HepG2 (cell line): ENCODE measurements at regions of chr14 and their contacts with region 1.

Region 1: GRCh38 chr14:23320774-23321571 is at the start of gene PABPN1:
- DNase-seq: peak; percentile 100
- ATAC-seq: peak; percentile 94
- H3K4me3 ChIP-seq: peak within 1 kb of the TSS; percentile 79 to 99 (median 98)
- H3K27ac ChIP-seq: peak within 1 kb of the TSS; percentile 95
- H3K4me1 ChIP-seq: peaks cover 36% of the 10 kb centered on the region
- H3K27me3 ChIP-seq: peaks cover 0 to 6% of the 10 kb centered on the region in 2 experiments; a peak in 2 of 5 replicates
- CTCF ChIP-seq: peak; percentile 10
- EP300 ChIP-seq: peak; percentile 68 to 90; a peak in 3 of 4 replicates
- POLR2A ChIP-seq: peak in 1 of 2 experiments; percentile 91; a peak in 2 of 4 replicates
- RAD21 ChIP-seq: peak; percentile 67
- total RNA-seq, gene PABPN1: 173 and 233 TPM in 2 replicates

Region 2: GRCh38 chr14:22955702-22956569 is 365.0 kb before region 1 on chr14:
- CTCF ChIA-PET with region 1: no interaction called
- POLR2A ChIA-PET with region 1: no interaction called
- in situ Hi-C with region 1: no loop called
- intact Hi-C with region 1: no loop called
- DNase-seq: peak; percentile 48
- ATAC-seq: peak; percentile 27
- H3K4me3 ChIP-seq: peak overlapping the region; percentile 73 to 78 (median 77)
- H3K27ac ChIP-seq: peak overlapping the region; percentile 78
- H3K4me1 ChIP-seq: peaks cover 47% of the 10 kb centered on the region
- H3K27me3 ChIP-seq: no peaks in the 10 kb centered on the region; a peak in 1 of 5 replicates
- CTCF ChIP-seq: no peak
- EP300 ChIP-seq: peak in 1 of 2 experiments; percentile 25; a peak in 1 of 4 replicates
- POLR2A ChIP-seq: no peak
- RAD21 ChIP-seq: no peak

Region 3: DNA sequence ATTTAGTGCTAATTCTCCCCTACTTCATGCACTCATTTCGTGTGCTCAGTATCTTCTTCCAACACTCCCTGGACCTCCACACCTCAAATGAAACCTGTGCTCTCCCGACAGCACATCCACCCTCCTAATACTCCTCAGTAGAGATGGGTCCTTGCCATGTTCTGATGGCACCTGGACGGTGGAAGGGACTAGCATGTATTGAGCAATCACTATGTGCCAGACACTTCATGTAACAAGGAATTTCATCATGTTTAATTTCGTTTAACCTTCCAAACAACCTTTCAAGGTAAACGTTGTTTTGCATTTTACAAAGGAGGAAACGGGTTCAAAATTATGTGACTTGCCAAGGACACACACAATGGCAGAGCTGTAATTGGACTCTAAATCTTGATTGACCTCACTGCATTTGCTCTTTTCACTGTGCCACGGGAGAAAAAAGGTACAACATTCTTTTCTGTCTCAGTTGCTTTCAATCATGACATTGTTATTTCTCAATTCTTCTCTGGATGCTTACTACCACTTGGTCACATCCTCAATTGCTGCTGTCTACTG is 125.3 kb before region 1 on chr14:
- CTCF ChIA-PET with region 1: no interaction called
- POLR2A ChIA-PET with region 1: no interaction called
- in situ Hi-C with region 1: no loop called
- intact Hi-C with region 1: no loop called
- DNase-seq: peak; percentile 35
- ATAC-seq: peak; percentile 49
- H3K4me3 ChIP-seq: no peak overlapping the region
- H3K27ac ChIP-seq: no peak overlapping the region
- H3K4me1 ChIP-seq: peaks cover 24% of the 10 kb centered on the region
- H3K27me3 ChIP-seq: 0 out of 5 replicates have a peak, but pooled peaks cover 0 to 3% of the 10 kb centered on the region in 2 experiments
- CTCF ChIP-seq: no peak
- EP300 ChIP-seq: peak in 1 of 2 experiments; percentile 28; a peak in 1 of 4 replicates
- POLR2A ChIP-seq: no peak
- RAD21 ChIP-seq: no peak

Region 4: GRCh38 chr14:23281247-23281646 is 39.7 kb before region 1 on chr14:
- CTCF ChIA-PET with region 1: no interaction called
- POLR2A ChIA-PET with region 1: interaction called, 165 read pairs
- in situ Hi-C with region 1: no loop called
- intact Hi-C with region 1: loop called (anchors 1 kb)
- DNase-seq: no peak
- ATAC-seq: no peak
- H3K4me3 ChIP-seq: no peak overlapping the region
- H3K27ac ChIP-seq: no peak overlapping the region
- H3K4me1 ChIP-seq: peaks cover 25% of the 10 kb centered on the region
- H3K27me3 ChIP-seq: no peaks in the 10 kb centered on the region; a peak in 1 of 5 replicates
- CTCF ChIP-seq: no peak
- EP300 ChIP-seq: no peak
- POLR2A ChIP-seq: no peak
- RAD21 ChIP-seq: no peak

Region 5: GRCh38 chr14:23335623-23336022 is 14.7 kb after region 1 on chr14:
- CTCF ChIA-PET with region 1: no interaction called
- POLR2A ChIA-PET with region 1: interaction called, 22 read pairs
- in situ Hi-C with region 1: no loop called
- intact Hi-C with region 1: no loop called
- DNase-seq: no peak
- ATAC-seq: no peak
- H3K4me3 ChIP-seq: no peak overlapping the region
- H3K27ac ChIP-seq: no peak overlapping the region
- H3K4me1 ChIP-seq: no peaks in the 10 kb centered on the region
- H3K27me3 ChIP-seq: peaks cover 0 to 21% of the 10 kb centered on the region in 2 experiments; a peak in 1 of 5 replicates
- CTCF ChIP-seq: no peak
- EP300 ChIP-seq: no peak
- POLR2A ChIP-seq: no peak
- RAD21 ChIP-seq: no peak

Region 6: GRCh38 chr14:23379366-23380196 is 58.6 kb after region 1 on chr14:
- CTCF ChIA-PET with region 1: interaction called, 111 read pairs
- POLR2A ChIA-PET with region 1: interaction called, 16 read pairs
- in situ Hi-C with region 1: loop called (anchors 5 kb)
- intact Hi-C with region 1: no loop called
- DNase-seq: peak; percentile 66
- ATAC-seq: peak; percentile 88
- H3K4me3 ChIP-seq: no peak overlapping the region
- H3K27ac ChIP-seq: no peak overlapping the region
- H3K4me1 ChIP-seq: no peaks in the 10 kb centered on the region
- H3K27me3 ChIP-seq: peaks cover 26 to 90% of the 10 kb centered on the region in 2 experiments
- CTCF ChIP-seq: peak; percentile 100
- EP300 ChIP-seq: no peak
- POLR2A ChIP-seq: no peak
- RAD21 ChIP-seq: peak; percentile 98

Region 7: GRCh38 chr14:23512156-23512555 is 191.2 kb after region 1 on chr14:
- CTCF ChIA-PET with region 1: no interaction called
- POLR2A ChIA-PET with region 1: no interaction called
- in situ Hi-C with region 1: no loop called
- intact Hi-C with region 1: no loop called
- DNase-seq: no peak
- ATAC-seq: no peak
- H3K4me3 ChIP-seq: no peak overlapping the region
- H3K27ac ChIP-seq: no peak overlapping the region
- H3K4me1 ChIP-seq: no peaks in the 10 kb centered on the region
- H3K27me3 ChIP-seq: no peaks in the 10 kb centered on the region
- CTCF ChIP-seq: no peak
- EP300 ChIP-seq: no peak
- POLR2A ChIP-seq: no peak
- RAD21 ChIP-seq: no peak

Region 8: GRCh38 chr14:23567192-23568020 is 246.4 kb after region 1 on chr14 and contains the start of gene AP1G2:
- CTCF ChIA-PET with region 1: no interaction called
- POLR2A ChIA-PET with region 1: interaction called, 25 read pairs
- in situ Hi-C with region 1: no loop called
- intact Hi-C with region 1: no loop called
- DNase-seq: peak; percentile 97
- ATAC-seq: peak; percentile 86
- H3K4me3 ChIP-seq: peak within 1 kb of the TSS; percentile 68 to 88 (median 70)
- H3K27ac ChIP-seq: peak within 1 kb of the TSS; percentile 41
- H3K4me1 ChIP-seq: peaks cover 49% of the 10 kb centered on the region
- H3K27me3 ChIP-seq: peaks cover 0 to 8% of the 10 kb centered on the region in 2 experiments; a peak in 1 of 5 replicates
- CTCF ChIP-seq: peak; percentile 50
- EP300 ChIP-seq: peak in 1 of 2 experiments; percentile 54; a peak in 1 of 4 replicates
- POLR2A ChIP-seq: peak in 1 of 2 experiments; percentile 83; a peak in 2 of 4 replicates
- RAD21 ChIP-seq: no peak; the same call in 1 of the 2 replicates
- total RNA-seq, gene AP1G2: 39.4 and 96.9 TPM in 2 replicates

Region 9: GRCh38 chr14:23640524-23641141 is 319.7 kb after region 1 on chr14:
- CTCF ChIA-PET with region 1: no interaction called
- POLR2A ChIA-PET with region 1: interaction called, 21 read pairs
- in situ Hi-C with region 1: no loop called
- intact Hi-C with region 1: no loop called
- DNase-seq: peak; percentile 54
- ATAC-seq: no peak
- H3K4me3 ChIP-seq: peak overlapping the region in 1 of 3 experiments; percentile 74; a peak in 1 of 6 replicates
- H3K27ac ChIP-seq: peak overlapping the region; percentile 59
- H3K4me1 ChIP-seq: peaks cover 65% of the 10 kb centered on the region
- H3K27me3 ChIP-seq: no peaks in the 10 kb centered on the region; a peak in 1 of 5 replicates
- CTCF ChIP-seq: no peak
- EP300 ChIP-seq: no peak
- POLR2A ChIP-seq: peak in 1 of 2 experiments; percentile 77; a peak in 2 of 4 replicates
- RAD21 ChIP-seq: no peak